AG04449 (cell line): ENCODE measurements at regions of chr5 and their contacts with region 1.

Region 1: DNA sequence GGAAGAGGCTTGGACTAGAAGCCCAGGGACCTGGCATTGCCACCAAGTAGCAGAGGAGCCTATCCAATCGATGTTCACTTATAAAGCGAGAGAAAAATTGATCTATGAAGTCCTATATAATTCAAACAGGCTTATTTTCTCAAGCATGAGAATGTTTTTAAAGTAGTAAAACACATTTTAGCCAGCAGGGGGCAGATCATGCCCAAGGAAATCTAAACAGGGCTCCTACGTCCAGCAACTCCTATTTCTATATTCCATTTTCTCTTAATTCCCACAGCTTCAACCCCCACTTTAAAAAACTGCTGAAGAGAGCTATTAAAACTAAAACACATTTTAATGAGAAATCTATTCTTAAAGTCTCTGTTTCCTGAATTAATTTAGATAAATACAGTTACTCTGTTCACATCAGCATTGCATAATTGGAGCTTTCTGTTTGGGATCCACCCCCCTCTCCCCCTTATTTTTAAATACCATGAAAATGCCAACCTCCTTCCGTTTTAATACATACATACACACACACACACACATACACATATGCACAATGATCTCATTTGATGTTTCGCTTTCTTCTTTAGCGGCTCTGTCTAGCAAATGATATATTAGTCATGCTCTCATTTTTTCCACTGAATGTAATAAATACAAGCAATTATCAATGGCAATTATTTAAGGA is 144.9 kb downstream of the MYO10 start:
- DNase-seq: no peak
- H3K4me3 ChIP-seq: no peak overlapping the region
- CTCF ChIP-seq: peak; percentile 22

Region 2: GRCh38 chr5:16776611-16777251 is 14.4 kb before region 1 on chr5:
- CTCF ChIA-PET with region 1: interaction called, 12 read pairs
- POLR2A ChIA-PET with region 1: no interaction called
- DNase-seq: no peak
- H3K4me3 ChIP-seq: no peak overlapping the region
- CTCF ChIP-seq: no peak

Region 3: GRCh38 chr5:16809395-16810207 is 18.4 kb after region 1 on chr5:
- CTCF ChIA-PET with region 1: interaction called, 14 read pairs
- POLR2A ChIA-PET with region 1: no interaction called
- DNase-seq: peak; percentile 82
- H3K4me3 ChIP-seq: peak overlapping the region; percentile 42
- CTCF ChIP-seq: no peak

Region 4: DNA sequence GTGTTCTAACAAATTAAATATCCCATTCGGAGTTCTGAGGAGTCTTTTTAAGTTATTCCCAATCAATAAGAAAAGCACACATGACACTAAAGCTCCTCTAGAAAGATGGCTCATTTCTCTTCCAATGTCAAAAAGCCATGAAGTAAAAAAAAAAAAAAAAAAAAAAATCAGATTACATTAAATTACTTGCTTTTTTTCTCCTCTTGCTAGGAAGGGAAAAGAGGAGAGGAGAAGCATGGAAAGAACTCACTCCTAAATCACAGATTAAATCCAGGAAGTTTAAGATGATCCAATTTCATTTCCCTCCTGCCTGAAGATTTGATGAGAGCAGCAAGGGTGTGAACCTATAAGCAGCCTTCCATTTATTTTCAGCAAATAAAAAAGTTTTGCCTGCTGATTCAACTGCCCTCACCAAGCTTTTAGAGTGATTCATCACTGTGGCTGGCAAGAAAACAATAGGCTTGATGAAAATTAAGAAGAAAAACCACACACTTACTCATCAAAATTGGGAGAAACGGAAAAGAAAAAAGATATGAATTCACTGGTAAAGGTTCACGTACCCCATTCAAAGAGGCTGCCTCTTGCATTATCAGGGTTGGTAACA is 125.2 kb after region 1 on chr5:
- CTCF ChIA-PET with region 1: interaction called, 10 read pairs
- POLR2A ChIA-PET with region 1: no interaction called
- DNase-seq: peak; percentile 84
- H3K4me3 ChIP-seq: no peak overlapping the region
- CTCF ChIP-seq: no peak

Region 5: GRCh38 chr5:16934123-16934522 is 143.0 kb after region 1 on chr5:
- CTCF ChIA-PET with region 1: interaction called, 28 read pairs
- POLR2A ChIA-PET with region 1: interaction called, 4 read pairs
- DNase-seq: no peak
- H3K4me3 ChIP-seq: peak overlapping the region; percentile 67
- CTCF ChIP-seq: peak; percentile 93

Region 6: DNA sequence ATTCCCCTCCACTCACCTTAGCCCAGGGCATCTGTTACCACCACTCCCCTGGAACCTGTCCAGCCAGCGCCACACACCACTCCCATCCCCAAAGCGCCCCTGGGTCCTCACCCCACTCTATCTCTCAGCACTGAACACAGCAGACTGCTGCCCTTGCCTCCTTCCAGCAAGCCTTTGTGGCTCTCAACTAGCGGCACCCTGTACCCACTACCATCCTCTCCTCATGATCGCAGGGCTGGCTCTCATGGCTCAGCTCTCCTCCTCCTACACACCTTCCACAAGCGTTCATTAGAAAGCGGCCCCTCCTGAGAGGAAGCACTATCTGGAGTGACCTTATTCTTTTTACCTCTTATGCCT is 412.9 kb after region 1 on chr5:
- CTCF ChIA-PET with region 1: interaction called, 33 read pairs
- POLR2A ChIA-PET with region 1: no interaction called
- DNase-seq: no peak
- H3K4me3 ChIP-seq: no peak overlapping the region
- CTCF ChIP-seq: no peak